Posterior cingulate gyrus (tissue), 11 donors: ENCODE measurements at regions of chr3 and their contacts with region 1.

Region 1: GRCh38 chr3:32340039-32340438 is 51.6 kb upstream of the CMTM7 start:
- DNase-seq: no peak

Region 2: GRCh38 chr3:32177702-32178198 is 162.3 kb before region 1 on chr3:
- intact Hi-C with region 1: loop called (anchors 5 kb)
- DNase-seq: no peak

Region 3: GRCh38 chr3:32391643-32392535 is 51.9 kb after region 1 on chr3 and contains the start of gene CMTM7:
- intact Hi-C with region 1: no loop called
- DNase-seq: peak in 3 of 10 donors; percentile 14 to 81 (median 24)